ENCODE measurements at regions of chr10 and their contacts with region 1.

Region 1: DNA sequence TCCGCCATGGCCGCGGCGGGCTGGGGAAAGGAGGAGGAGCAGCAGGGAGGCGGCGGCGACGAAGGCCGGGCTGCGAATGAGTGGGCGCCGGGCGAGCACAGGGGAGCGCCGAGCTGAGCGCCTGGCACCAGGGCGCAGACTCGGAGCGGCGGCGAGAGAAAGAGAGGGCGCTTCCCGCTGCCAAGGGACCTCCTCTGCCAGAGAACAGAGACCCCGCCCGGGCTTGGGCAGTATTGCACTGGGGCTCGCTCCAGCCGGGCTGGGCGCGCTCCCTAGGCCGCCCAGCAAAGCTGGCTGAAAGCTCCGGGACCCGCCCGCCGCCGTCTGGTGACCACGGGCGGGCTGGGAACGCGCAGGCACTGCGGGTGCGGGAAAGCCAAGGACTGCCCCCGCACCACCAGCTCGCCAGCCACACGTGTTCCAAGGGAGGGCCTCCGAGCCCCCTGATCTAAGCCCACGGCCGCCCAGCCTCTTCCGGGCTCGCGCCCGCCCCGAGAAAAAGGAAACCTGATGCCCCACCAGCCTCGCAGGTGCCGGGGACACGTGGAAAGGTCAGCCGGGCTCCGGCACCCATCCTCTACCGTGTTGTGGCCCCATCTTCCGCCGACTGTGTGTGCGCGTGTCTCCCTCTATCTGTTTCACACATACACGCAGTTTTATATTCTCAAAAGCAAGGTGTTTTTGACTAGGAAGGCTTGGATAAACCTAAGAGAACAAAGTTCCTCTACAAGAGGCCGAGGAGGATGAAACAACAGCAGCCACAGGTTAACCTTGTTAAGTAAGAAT is at the start of gene CCDC6:
- DNase-seq: peak; percentile 97
- ATAC-seq: peak; percentile 82
- H3K4me3 Mint-ChIP-seq: peak within 1 kb of the TSS; percentile 97
- H3K27ac Mint-ChIP-seq: peak within 1 kb of the TSS; percentile 99
- H3K4me1 Mint-ChIP-seq: peaks cover 64% of the 10 kb centered on the region
- H3K27me3 Mint-ChIP-seq: no peaks in the 10 kb centered on the region
- total RNA-seq, gene CCDC6: 49.7 to 53.0 TPM

Region 2: GRCh38 chr10:58268870-58269605 is 1637.6 kb before region 1 on chr10 and contains the start of gene CISD1:
- CTCF ChIA-PET with region 1: no interaction called
- POLR2A ChIA-PET with region 1: no interaction called
- intact Hi-C with region 1: loop called in 1 of 2 experiments (anchors 5 kb)
- DNase-seq: peak; percentile 96
- ATAC-seq: peak; percentile 76
- H3K4me3 Mint-ChIP-seq: peak within 1 kb of the TSS; percentile 99
- H3K27ac Mint-ChIP-seq: peak within 1 kb of the TSS; percentile 92
- H3K4me1 Mint-ChIP-seq: peaks cover 29% of the 10 kb centered on the region
- H3K27me3 Mint-ChIP-seq: no peaks in the 10 kb centered on the region
- total RNA-seq, gene CISD1: 29.9 to 49.2 TPM

Region 3: GRCh38 chr10:59709395-59710125 is 197.1 kb before region 1 on chr10 and contains the start of gene SLC16A9:
- CTCF ChIA-PET with region 1: no interaction called
- POLR2A ChIA-PET with region 1: interaction called, 7 read pairs
- intact Hi-C with region 1: loop called (anchors 1 to 5 kb)
- DNase-seq: peak; percentile 83
- ATAC-seq: peak; percentile 94
- H3K4me3 Mint-ChIP-seq: peak within 1 kb of the TSS; percentile 68
- H3K27ac Mint-ChIP-seq: peak within 1 kb of the TSS; percentile 10
- H3K4me1 Mint-ChIP-seq: no peaks in the 10 kb centered on the region
- H3K27me3 Mint-ChIP-seq: peaks cover 52% of the 10 kb centered on the region
- total RNA-seq, gene SLC16A9: 1.0 to 1.4 TPM

Region 4: DNA sequence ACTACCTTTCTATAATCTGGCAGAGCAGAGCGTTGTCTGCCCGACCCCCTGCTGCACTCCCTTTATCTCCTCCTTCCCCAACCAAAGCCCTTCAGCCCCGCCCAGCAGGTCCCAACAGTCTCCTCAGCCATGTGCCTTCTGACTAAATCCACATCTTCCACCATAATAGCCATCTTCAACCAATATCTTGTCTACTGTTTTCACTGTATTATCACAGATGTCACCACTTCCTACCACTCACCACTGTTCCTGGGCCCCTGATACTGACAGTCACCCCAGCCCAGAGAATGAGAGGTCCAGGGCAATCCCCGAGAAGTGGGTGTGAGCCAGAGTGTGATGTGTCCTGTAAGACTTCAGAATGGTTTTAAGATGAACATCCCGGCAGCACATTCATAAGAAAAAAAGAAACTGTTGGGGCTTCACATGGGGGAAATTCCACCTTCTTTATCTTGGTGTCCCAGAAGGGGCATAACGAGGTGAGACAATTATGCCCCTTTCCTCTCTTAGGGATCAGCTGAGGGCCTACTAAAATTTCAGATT is 25.6 kb before region 1 on chr10:
- CTCF ChIA-PET with region 1: interaction called, 12 read pairs
- POLR2A ChIA-PET with region 1: interaction called, 13 read pairs
- intact Hi-C with region 1: loop called (anchors 1 kb)
- DNase-seq: peak; percentile 90
- ATAC-seq: peak; percentile 88
- H3K4me3 Mint-ChIP-seq: peak overlapping the region; percentile 53
- H3K27ac Mint-ChIP-seq: peak overlapping the region; percentile 85
- H3K4me1 Mint-ChIP-seq: peaks cover 87% of the 10 kb centered on the region
- H3K27me3 Mint-ChIP-seq: no peaks in the 10 kb centered on the region

Region 5: DNA sequence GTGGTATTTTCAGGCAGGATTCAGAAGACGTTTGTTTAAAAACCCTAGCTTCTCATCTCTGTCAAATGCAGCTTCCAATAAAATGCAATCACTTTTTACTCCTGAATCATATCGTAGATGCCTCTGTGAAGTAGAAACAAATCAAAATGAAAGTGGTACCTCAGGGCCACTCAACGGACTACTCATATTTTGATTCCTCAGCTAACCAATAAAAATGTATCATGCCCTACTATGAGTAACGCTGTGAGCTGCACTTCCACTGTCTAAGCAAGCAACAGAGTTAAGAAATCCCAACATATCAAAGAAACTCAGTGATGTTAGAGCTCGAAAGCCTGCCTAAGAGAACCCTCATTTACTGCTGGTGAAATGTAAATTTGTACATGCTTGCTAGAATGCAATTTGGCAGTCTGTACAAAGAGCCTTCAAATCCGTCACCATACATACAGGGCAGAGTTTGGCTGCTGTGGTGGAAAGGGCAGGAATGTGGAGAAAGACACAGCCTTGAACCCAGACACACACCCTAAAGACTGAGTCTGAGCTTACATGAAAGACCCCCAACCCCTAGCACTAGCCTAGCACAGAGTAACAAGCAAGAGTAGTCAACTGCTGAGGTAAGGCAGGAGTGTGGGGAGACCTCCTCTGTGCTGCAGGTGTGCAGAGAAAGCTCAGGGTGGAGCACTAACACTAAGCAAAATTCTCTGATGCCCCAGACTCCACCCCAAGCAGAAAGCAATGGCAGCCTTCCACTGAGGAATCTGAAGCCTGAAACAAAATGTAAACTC is 331.6 kb after region 1 on chr10:
- CTCF ChIA-PET with region 1: no interaction called
- POLR2A ChIA-PET with region 1: no interaction called
- intact Hi-C with region 1: loop called (anchors 2 to 10 kb)
- DNase-seq: peak; percentile 54
- ATAC-seq: peak; percentile 96
- H3K4me3 Mint-ChIP-seq: peak overlapping the region; percentile 48
- H3K27ac Mint-ChIP-seq: peak overlapping the region; percentile 70
- H3K4me1 Mint-ChIP-seq: peaks cover 33% of the 10 kb centered on the region
- H3K27me3 Mint-ChIP-seq: no peaks in the 10 kb centered on the region

Region 6: GRCh38 chr10:60778214-60779029 is 871.8 kb after region 1 on chr10 and contains the start of gene CDK1:
- CTCF ChIA-PET with region 1: no interaction called
- POLR2A ChIA-PET with region 1: no interaction called
- intact Hi-C with region 1: loop called in 1 of 2 experiments (anchors 1 kb)
- DNase-seq: peak; percentile 98
- ATAC-seq: peak; percentile 99
- H3K4me3 Mint-ChIP-seq: peak within 1 kb of the TSS; percentile 98
- H3K27ac Mint-ChIP-seq: peak within 1 kb of the TSS; percentile 96
- H3K4me1 Mint-ChIP-seq: peaks cover 17% of the 10 kb centered on the region
- H3K27me3 Mint-ChIP-seq: no peaks in the 10 kb centered on the region
- total RNA-seq, gene CDK1: 88.5 to 138 TPM

Measured in activated CD4-positive, alpha-beta T cell treated with anti-CD3 and anti-CD28 coated beads for 36 hours (primary cell).